Activated B cell treated with CpG ODN at 0.5 μM for 24 hours (primary cell): ENCODE measurements at regions of chr5 and their contacts with region 1.

Region 1: DNA sequence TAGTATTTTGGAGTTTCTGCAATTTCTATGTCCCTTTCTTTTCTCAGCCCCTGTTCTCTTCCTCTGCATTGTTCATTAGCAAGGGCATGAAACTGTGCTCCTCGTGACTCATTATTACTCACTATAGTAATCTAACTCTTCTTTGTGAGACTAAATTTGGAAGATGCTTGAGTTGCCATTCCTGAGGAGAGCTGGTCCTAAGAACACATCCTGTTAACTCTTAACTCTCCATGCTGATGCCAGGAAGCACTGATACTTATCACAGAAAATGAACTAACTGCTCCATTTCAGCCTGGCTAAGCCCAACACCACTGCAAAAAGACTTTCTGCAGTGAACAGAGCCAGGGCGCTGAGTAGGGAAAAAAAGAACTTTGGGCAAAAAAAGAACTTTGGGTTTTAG is 10.6 kb upstream of the CSNK1A1 start:
- DNase-seq: no peak
- ATAC-seq: no peak
- H3K4me3 Mint-ChIP-seq: no peak overlapping the region
- H3K27ac Mint-ChIP-seq: no peak overlapping the region
- H3K4me1 Mint-ChIP-seq: no peaks in the 10 kb centered on the region
- H3K27me3 Mint-ChIP-seq: no peaks in the 10 kb centered on the region
- CTCF ChIP-seq: no peak

Region 2: DNA sequence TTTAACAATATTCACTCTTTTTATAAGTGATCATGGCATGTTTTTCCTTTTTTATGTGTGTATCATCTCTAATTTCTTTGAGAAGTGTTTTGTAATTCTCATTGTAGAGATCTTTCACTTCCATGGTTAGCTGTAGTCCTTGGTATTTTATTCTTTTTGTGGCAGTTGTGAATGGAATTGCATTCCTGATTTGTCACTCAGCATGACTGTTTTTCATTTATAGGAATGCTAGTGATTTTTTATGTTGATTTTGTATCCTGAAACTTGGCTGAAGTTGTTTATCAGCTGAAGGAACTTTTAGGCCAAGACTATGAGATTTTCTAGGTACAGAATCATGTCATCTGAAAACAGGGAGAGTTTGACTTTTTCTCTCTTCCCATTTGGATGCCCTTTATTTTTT is 1306.4 kb before region 1 on chr5:
- CTCF ChIA-PET with region 1: no interaction called
- POLR2A ChIA-PET with region 1: no interaction called
- intact Hi-C with region 1: no loop called
- DNase-seq: no peak
- ATAC-seq: no peak
- H3K4me3 Mint-ChIP-seq: no peak overlapping the region
- H3K27ac Mint-ChIP-seq: no peak overlapping the region
- H3K4me1 Mint-ChIP-seq: no peaks in the 10 kb centered on the region
- H3K27me3 Mint-ChIP-seq: peaks cover 2% of the 10 kb centered on the region
- CTCF ChIP-seq: no peak

Region 3: GRCh38 chr5:148443998-148444397 is 1117.8 kb before region 1 on chr5:
- CTCF ChIA-PET with region 1: no interaction called
- POLR2A ChIA-PET with region 1: no interaction called
- intact Hi-C with region 1: loop called (anchors 10 kb)
- DNase-seq: no peak
- ATAC-seq: peak; percentile 67
- H3K4me3 Mint-ChIP-seq: no peak overlapping the region
- H3K27ac Mint-ChIP-seq: no peak overlapping the region
- H3K4me1 Mint-ChIP-seq: no peaks in the 10 kb centered on the region
- H3K27me3 Mint-ChIP-seq: no peaks in the 10 kb centered on the region
- CTCF ChIP-seq: no peak

Region 4: GRCh38 chr5:149133795-149134780 is 427.8 kb before region 1 on chr5:
- CTCF ChIA-PET with region 1: no interaction called
- POLR2A ChIA-PET with region 1: no interaction called
- intact Hi-C with region 1: loop called (anchors 10 kb)
- DNase-seq: no peak
- ATAC-seq: no peak
- H3K4me3 Mint-ChIP-seq: no peak overlapping the region
- H3K27ac Mint-ChIP-seq: no peak overlapping the region
- H3K4me1 Mint-ChIP-seq: no peaks in the 10 kb centered on the region
- H3K27me3 Mint-ChIP-seq: peaks cover 20% of the 10 kb centered on the region
- CTCF ChIP-seq: no peak

Region 5: GRCh38 chr5:149317281-149318048 is 244.4 kb before region 1 on chr5:
- CTCF ChIA-PET with region 1: interaction called, 11 read pairs
- POLR2A ChIA-PET with region 1: no interaction called
- intact Hi-C with region 1: loop called (anchors 1 kb)
- DNase-seq: no peak
- ATAC-seq: no peak
- H3K4me3 Mint-ChIP-seq: no peak overlapping the region
- H3K27ac Mint-ChIP-seq: no peak overlapping the region
- H3K4me1 Mint-ChIP-seq: no peaks in the 10 kb centered on the region
- H3K27me3 Mint-ChIP-seq: no peaks in the 10 kb centered on the region
- CTCF ChIP-seq: no peak

Region 6: DNA sequence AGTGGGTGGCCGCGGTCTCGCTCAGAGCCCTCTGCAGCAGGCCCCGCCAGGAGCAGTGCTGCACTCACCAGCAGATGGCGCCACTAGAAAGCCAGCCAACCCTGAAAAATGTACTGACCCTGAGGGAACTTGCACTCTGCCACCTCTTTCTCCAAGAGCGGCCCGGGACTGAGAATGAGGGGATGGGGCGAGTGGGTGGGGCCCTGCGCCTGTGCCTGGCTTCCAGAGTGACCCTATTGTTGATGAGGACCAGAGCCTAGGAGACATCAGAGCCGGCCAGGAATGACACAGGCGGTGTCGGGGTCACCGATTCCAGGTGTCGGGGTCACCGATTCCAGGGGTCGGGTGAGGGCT is 179.9 kb before region 1 on chr5:
- CTCF ChIA-PET with region 1: interaction called, 18 read pairs
- POLR2A ChIA-PET with region 1: no interaction called
- intact Hi-C with region 1: loop called (anchors 1 kb)
- DNase-seq: peak; percentile 52
- ATAC-seq: peak; percentile 62
- H3K4me3 Mint-ChIP-seq: no peak overlapping the region
- H3K27ac Mint-ChIP-seq: no peak overlapping the region
- H3K4me1 Mint-ChIP-seq: peaks cover 4% of the 10 kb centered on the region
- H3K27me3 Mint-ChIP-seq: peaks cover 9% of the 10 kb centered on the region
- CTCF ChIP-seq: no peak

Region 7: GRCh38 chr5:149442563-149443182 is 119.2 kb before region 1 on chr5:
- CTCF ChIA-PET with region 1: interaction called, 14 read pairs
- POLR2A ChIA-PET with region 1: no interaction called
- intact Hi-C with region 1: loop called (anchors 1 kb)
- DNase-seq: peak; percentile 59
- ATAC-seq: peak; percentile 71
- H3K4me3 Mint-ChIP-seq: no peak overlapping the region
- H3K27ac Mint-ChIP-seq: no peak overlapping the region
- H3K4me1 Mint-ChIP-seq: peaks cover 1% of the 10 kb centered on the region
- H3K27me3 Mint-ChIP-seq: peaks cover 11% of the 10 kb centered on the region
- CTCF ChIP-seq: peak; percentile 67

Region 8: DNA sequence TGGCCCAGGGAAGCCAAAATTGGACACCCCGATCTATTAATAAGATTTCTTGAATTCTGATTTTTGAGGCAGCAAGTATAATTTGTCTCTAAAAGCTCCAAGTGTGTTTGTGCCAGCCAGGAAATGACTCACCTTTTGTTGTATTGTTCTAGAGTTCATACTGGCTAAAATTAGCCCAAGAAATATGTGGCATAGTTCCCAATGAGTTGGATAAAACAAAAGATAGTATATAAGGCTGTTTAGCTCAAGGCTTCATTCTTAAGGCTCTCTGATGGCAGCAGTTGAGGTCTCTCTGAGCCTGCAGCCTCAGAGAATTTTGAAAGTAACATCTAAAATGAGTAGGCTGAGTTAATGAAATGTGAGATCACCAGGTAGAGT is 460.3 kb after region 1 on chr5:
- CTCF ChIA-PET with region 1: no interaction called
- POLR2A ChIA-PET with region 1: no interaction called
- intact Hi-C with region 1: no loop called
- DNase-seq: no peak
- ATAC-seq: no peak
- H3K4me3 Mint-ChIP-seq: no peak overlapping the region
- H3K27ac Mint-ChIP-seq: no peak overlapping the region
- H3K4me1 Mint-ChIP-seq: no peaks in the 10 kb centered on the region
- H3K27me3 Mint-ChIP-seq: no peaks in the 10 kb centered on the region
- CTCF ChIP-seq: no peak

Region 9: DNA sequence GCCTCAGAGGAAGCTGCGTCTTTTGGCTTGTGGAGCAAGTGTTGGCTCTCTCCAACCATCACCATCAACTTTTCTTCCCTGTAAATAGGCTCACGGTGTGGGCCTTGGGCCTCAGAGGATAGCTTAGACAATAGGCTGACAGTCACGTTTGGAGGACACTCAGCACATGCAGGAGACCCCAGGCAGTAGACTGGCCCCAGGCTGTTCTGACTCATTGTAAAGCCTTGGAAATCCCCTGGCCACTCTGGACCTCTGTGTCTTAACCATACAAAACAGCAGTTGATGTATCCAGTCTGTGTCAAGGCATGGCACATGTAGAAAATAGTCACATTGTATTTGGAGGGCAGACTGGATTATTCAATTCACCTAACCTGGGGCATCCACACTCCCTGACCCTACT is 832.3 kb after region 1 on chr5:
- CTCF ChIA-PET with region 1: no interaction called
- POLR2A ChIA-PET with region 1: no interaction called
- intact Hi-C with region 1: no loop called
- DNase-seq: no peak
- ATAC-seq: no peak
- H3K4me3 Mint-ChIP-seq: no peak overlapping the region
- H3K27ac Mint-ChIP-seq: peak overlapping the region; percentile 50
- H3K4me1 Mint-ChIP-seq: peaks cover 13% of the 10 kb centered on the region
- H3K27me3 Mint-ChIP-seq: no peaks in the 10 kb centered on the region
- CTCF ChIP-seq: no peak